A673 (cell line): ENCODE measurements at regions of chr13 and their contacts with region 1.

Region 1: GRCh38 chr13:70568571-70568970 is 460.3 kb upstream of the KLHL1 start:
- DNase-seq: peak; percentile 47
- H3K4me3 ChIP-seq: no peak overlapping the region
- H3K27ac ChIP-seq: no peak overlapping the region
- H3K4me1 ChIP-seq: no peaks in the 10 kb centered on the region
- H3K27me3 ChIP-seq: no peaks in the 10 kb centered on the region
- CTCF ChIP-seq: peak; percentile 75

Region 2: GRCh38 chr13:70098669-70099068 is 469.9 kb before region 1 on chr13:
- CTCF ChIA-PET with region 1: no interaction called
- POLR2A ChIA-PET with region 1: no interaction called
- intact Hi-C with region 1: loop called (anchors 2 kb)
- DNase-seq: peak; percentile 4
- H3K4me3 ChIP-seq: no peak overlapping the region
- H3K27ac ChIP-seq: no peak overlapping the region
- H3K4me1 ChIP-seq: no peaks in the 10 kb centered on the region
- H3K27me3 ChIP-seq: no peaks in the 10 kb centered on the region
- CTCF ChIP-seq: peak; percentile 46; the same call in 1 of the 2 replicates

Region 3: GRCh38 chr13:70339738-70340137 is 228.8 kb before region 1 on chr13:
- CTCF ChIA-PET with region 1: no interaction called
- POLR2A ChIA-PET with region 1: no interaction called
- intact Hi-C with region 1: loop called (anchors 5 kb)
- DNase-seq: peak; percentile 48
- H3K4me3 ChIP-seq: no peak overlapping the region
- H3K27ac ChIP-seq: no peak overlapping the region
- H3K4me1 ChIP-seq: no peaks in the 10 kb centered on the region
- H3K27me3 ChIP-seq: peaks cover 7% of the 10 kb centered on the region
- CTCF ChIP-seq: peak; percentile 62